Activated CD8-positive, alpha-beta T cell treated with anti-CD3 and anti-CD28 coated beads, Interleukin-2, amount 10 ng/mL, durations not matched to agents 7 days and 5 days (primary cell): ENCODE measurements at regions of chr2 and their contacts with region 1.

Region 1: GRCh38 chr2:205682239-205682970 is at the start of gene NRP2:
- DNase-seq: peak; percentile 73
- ATAC-seq: peak; percentile 87
- H3K4me3 Mint-ChIP-seq: peak within 1 kb of the TSS; percentile 79
- H3K27ac Mint-ChIP-seq: no peak within 1 kb of the TSS
- H3K4me1 Mint-ChIP-seq: peaks cover 49% of the 10 kb centered on the region
- H3K27me3 Mint-ChIP-seq: peaks cover 67% of the 10 kb centered on the region
- total RNA-seq, gene NRP2: 4.0 to 4.2 TPM

Region 2: GRCh38 chr2:205372141-205372540 is 310.3 kb before region 1 on chr2:
- CTCF ChIA-PET with region 1: no interaction called
- POLR2A ChIA-PET with region 1: no interaction called
- DNase-seq: no peak
- ATAC-seq: no peak
- H3K4me3 Mint-ChIP-seq: no peak overlapping the region
- H3K27ac Mint-ChIP-seq: no peak overlapping the region
- H3K4me1 Mint-ChIP-seq: peaks cover 2% of the 10 kb centered on the region
- H3K27me3 Mint-ChIP-seq: peaks cover 2% of the 10 kb centered on the region

Region 3: GRCh38 chr2:205695460-205695991 is 13.1 kb after region 1 on chr2:
- CTCF ChIA-PET with region 1: interaction called, 15 read pairs
- POLR2A ChIA-PET with region 1: no interaction called
- DNase-seq: no peak
- ATAC-seq: no peak
- H3K4me3 Mint-ChIP-seq: no peak overlapping the region
- H3K27ac Mint-ChIP-seq: no peak overlapping the region
- H3K4me1 Mint-ChIP-seq: peaks cover 5% of the 10 kb centered on the region
- H3K27me3 Mint-ChIP-seq: peaks cover 29% of the 10 kb centered on the region